Activated CD4-positive, alpha-beta memory T cell treated with anti-CD3 and anti-CD28 coated beads for 36 hours (primary cell): ENCODE measurements at regions of chr16 and their contacts with region 1.

Region 1: GRCh38 chr16:11535471-11535870 is 51.2 kb downstream of the LITAF start:
- DNase-seq: no peak
- H3K4me3 Mint-ChIP-seq: no peak overlapping the region
- H3K27ac Mint-ChIP-seq: no peak overlapping the region
- H3K4me1 Mint-ChIP-seq: peaks cover 2% of the 10 kb centered on the region
- H3K27me3 Mint-ChIP-seq: no peaks in the 10 kb centered on the region

Region 2: DNA sequence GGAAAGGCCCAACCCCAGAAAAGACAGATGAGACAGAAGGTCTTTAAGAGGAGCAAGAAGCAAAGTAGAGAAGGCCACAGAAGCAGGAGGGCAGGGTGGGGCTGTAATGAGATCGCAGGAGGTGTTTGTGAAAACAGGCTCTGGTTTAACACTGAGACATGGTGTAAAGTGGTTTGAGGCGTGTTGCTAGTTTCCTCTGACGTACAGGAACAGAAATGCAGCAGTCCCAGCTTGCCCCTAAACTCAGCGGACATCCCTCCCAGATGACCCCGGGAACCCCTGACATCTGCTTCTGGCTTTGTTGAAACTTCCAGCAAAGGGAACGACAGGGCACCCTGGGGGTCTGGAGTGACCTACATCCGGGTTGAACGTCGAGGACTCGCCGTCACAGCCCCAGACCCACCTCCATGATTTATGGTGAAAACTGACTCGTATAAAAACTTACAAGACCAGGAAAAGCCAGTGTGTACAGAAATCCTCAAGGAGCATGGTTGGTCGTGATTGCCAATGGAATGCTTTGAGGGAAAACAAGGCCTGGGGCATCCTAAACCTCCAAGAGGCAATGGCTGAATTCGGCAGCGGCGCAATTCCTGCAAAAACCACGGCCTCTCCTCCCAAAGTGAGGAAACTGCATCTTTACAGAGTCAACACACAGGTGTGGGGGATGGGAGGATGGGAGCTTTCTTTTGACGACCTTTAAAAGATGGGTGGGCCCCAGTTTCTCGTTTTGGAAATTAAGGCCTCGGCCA is 25.4 kb after region 1 on chr16:
- CTCF ChIA-PET with region 1: interaction called, 11 read pairs
- POLR2A ChIA-PET with region 1: no interaction called
- intact Hi-C with region 1: no loop called
- DNase-seq: peak; percentile 77
- H3K4me3 Mint-ChIP-seq: peak overlapping the region; percentile 73
- H3K27ac Mint-ChIP-seq: peak overlapping the region; percentile 91
- H3K4me1 Mint-ChIP-seq: peaks cover 78% of the 10 kb centered on the region
- H3K27me3 Mint-ChIP-seq: no peaks in the 10 kb centered on the region

Region 3: DNA sequence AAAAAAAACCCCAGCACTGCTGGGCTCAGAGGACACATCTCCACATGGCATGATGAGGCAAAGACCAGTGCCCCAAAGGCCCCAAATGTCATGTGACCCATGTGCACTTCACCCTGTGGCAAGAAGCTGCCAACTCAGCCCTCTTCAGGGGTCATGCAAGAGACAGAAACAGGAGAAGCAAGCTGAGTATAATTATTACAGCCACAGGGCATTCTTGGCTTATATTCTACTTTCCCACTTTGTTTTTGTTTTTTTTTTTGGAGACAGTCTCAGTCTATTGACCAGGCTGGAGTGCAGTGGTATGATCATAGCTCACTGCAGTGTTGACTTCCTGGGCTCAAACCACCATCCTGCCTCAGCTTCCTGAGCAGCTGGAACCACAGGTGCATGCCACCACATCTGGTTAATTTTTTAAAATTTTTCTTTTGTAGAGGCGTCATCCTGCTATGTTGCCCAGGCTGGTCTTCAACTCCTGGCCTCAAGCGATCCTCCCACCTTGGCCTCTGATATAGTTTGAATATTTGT is 83.9 kb after region 1 on chr16:
- CTCF ChIA-PET with region 1: interaction called, 11 read pairs
- POLR2A ChIA-PET with region 1: no interaction called
- intact Hi-C with region 1: no loop called
- DNase-seq: peak; percentile 59
- H3K4me3 Mint-ChIP-seq: no peak overlapping the region
- H3K27ac Mint-ChIP-seq: peak overlapping the region; percentile 78
- H3K4me1 Mint-ChIP-seq: peaks cover 38% of the 10 kb centered on the region
- H3K27me3 Mint-ChIP-seq: no peaks in the 10 kb centered on the region

Region 4: GRCh38 chr16:11715246-11715947 is 179.9 kb after region 1 on chr16:
- CTCF ChIA-PET with region 1: interaction called, 49 read pairs
- POLR2A ChIA-PET with region 1: no interaction called
- intact Hi-C with region 1: loop called (anchors 1 kb)
- DNase-seq: no peak
- H3K4me3 Mint-ChIP-seq: no peak overlapping the region
- H3K27ac Mint-ChIP-seq: no peak overlapping the region
- H3K4me1 Mint-ChIP-seq: peaks cover 14% of the 10 kb centered on the region
- H3K27me3 Mint-ChIP-seq: no peaks in the 10 kb centered on the region

Region 5: GRCh38 chr16:11783319-11784037 is 248.0 kb after region 1 on chr16:
- CTCF ChIA-PET with region 1: no interaction called
- POLR2A ChIA-PET with region 1: no interaction called
- intact Hi-C with region 1: no loop called
- DNase-seq: peak; percentile 61
- H3K4me3 Mint-ChIP-seq: peak overlapping the region; percentile 78
- H3K27ac Mint-ChIP-seq: peak overlapping the region; percentile 100
- H3K4me1 Mint-ChIP-seq: peaks cover 68% of the 10 kb centered on the region
- H3K27me3 Mint-ChIP-seq: no peaks in the 10 kb centered on the region